B cell (primary cell): ENCODE measurements at regions of chr7 and their contacts with region 1.

Region 1: GRCh38 chr7:909358-910329 is 33.3 kb downstream of the GET4 start:
- DNase-seq: peak; percentile 85
- ATAC-seq: peak; percentile 40
- H3K4me3 ChIP-seq: peak overlapping the region in 4 of 5 experiments; percentile 29 to 61 (median 51)
- H3K4me3 Mint-ChIP-seq: peak overlapping the region; percentile 85
- H3K27ac ChIP-seq: peak overlapping the region; percentile 1 to 33
- H3K27ac Mint-ChIP-seq: peak overlapping the region; percentile 68
- H3K4me1 ChIP-seq: peaks cover 16 to 20% of the 10 kb centered on the region in 2 donors
- H3K4me1 Mint-ChIP-seq: peaks cover 18% of the 10 kb centered on the region
- H3K27me3 ChIP-seq: no peaks in the 10 kb centered on the region
- H3K27me3 Mint-ChIP-seq: no peaks in the 10 kb centered on the region
- CTCF ChIP-seq: no peak

Region 2: GRCh38 chr7:923108-924041 is 13.7 kb after region 1 on chr7:
- CTCF ChIA-PET with region 1: interaction called, 14 read pairs
- POLR2A ChIA-PET with region 1: interaction called, 3 read pairs
- intact Hi-C with region 1: loop called (anchors 1 kb)
- DNase-seq: peak; percentile 88
- ATAC-seq: peak; percentile 87
- H3K4me3 ChIP-seq: peak overlapping the region; percentile 21 to 67 (median 55)
- H3K4me3 Mint-ChIP-seq: peak overlapping the region; percentile 88
- H3K27ac ChIP-seq: peak overlapping the region; percentile 84 to 85
- H3K27ac Mint-ChIP-seq: peak overlapping the region; percentile 93
- H3K4me1 ChIP-seq: peaks cover 31 to 55% of the 10 kb centered on the region in 2 donors
- H3K4me1 Mint-ChIP-seq: peaks cover 37% of the 10 kb centered on the region
- H3K27me3 ChIP-seq: no peaks in the 10 kb centered on the region
- H3K27me3 Mint-ChIP-seq: no peaks in the 10 kb centered on the region
- CTCF ChIP-seq: no peak

Region 3: GRCh38 chr7:954330-955238 is 44.9 kb after region 1 on chr7 and contains the start of gene ADAP1:
- CTCF ChIA-PET with region 1: interaction called, 11 read pairs
- POLR2A ChIA-PET with region 1: interaction called, 6 read pairs
- intact Hi-C with region 1: loop called (anchors 1 kb)
- DNase-seq: peak; percentile 76
- ATAC-seq: peak; percentile 71
- H3K4me3 ChIP-seq: peak within 1 kb of the TSS in 3 of 5 experiments; percentile 30 to 61 (median 45)
- H3K4me3 Mint-ChIP-seq: peak within 1 kb of the TSS; percentile 76
- H3K27ac ChIP-seq: no peak within 1 kb of the TSS
- H3K27ac Mint-ChIP-seq: peak within 1 kb of the TSS; percentile 32
- H3K4me1 ChIP-seq: peaks cover 7 to 38% of the 10 kb centered on the region in 2 donors
- H3K4me1 Mint-ChIP-seq: peaks cover 19% of the 10 kb centered on the region
- H3K27me3 ChIP-seq: peaks cover 0 to 21% (median 5%) of the 10 kb centered on the region in 4 experiments
- H3K27me3 Mint-ChIP-seq: peaks cover 3% of the 10 kb centered on the region
- CTCF ChIP-seq: no peak
- total RNA-seq, gene ADAP1: 12.9 and 15.6 TPM in 2 replicates

Region 4: GRCh38 chr7:1144269-1144771 is 234.7 kb after region 1 on chr7:
- CTCF ChIA-PET with region 1: interaction called, 8 read pairs
- POLR2A ChIA-PET with region 1: no interaction called
- intact Hi-C with region 1: loop called (anchors 5 kb)
- DNase-seq: peak; percentile 65
- ATAC-seq: peak; percentile 42
- H3K4me3 ChIP-seq: no peak overlapping the region
- H3K4me3 Mint-ChIP-seq: peak overlapping the region; percentile 75
- H3K27ac ChIP-seq: no peak overlapping the region
- H3K27ac Mint-ChIP-seq: peak overlapping the region; percentile 85
- H3K4me1 ChIP-seq: peaks cover 15 to 33% of the 10 kb centered on the region in 2 donors
- H3K4me1 Mint-ChIP-seq: peaks cover 32% of the 10 kb centered on the region
- H3K27me3 ChIP-seq: no peaks in the 10 kb centered on the region
- H3K27me3 Mint-ChIP-seq: no peaks in the 10 kb centered on the region
- CTCF ChIP-seq: peak; percentile 27